ENCODE measurements at regions of chr20 and their contacts with region 1.

Region 1: DNA sequence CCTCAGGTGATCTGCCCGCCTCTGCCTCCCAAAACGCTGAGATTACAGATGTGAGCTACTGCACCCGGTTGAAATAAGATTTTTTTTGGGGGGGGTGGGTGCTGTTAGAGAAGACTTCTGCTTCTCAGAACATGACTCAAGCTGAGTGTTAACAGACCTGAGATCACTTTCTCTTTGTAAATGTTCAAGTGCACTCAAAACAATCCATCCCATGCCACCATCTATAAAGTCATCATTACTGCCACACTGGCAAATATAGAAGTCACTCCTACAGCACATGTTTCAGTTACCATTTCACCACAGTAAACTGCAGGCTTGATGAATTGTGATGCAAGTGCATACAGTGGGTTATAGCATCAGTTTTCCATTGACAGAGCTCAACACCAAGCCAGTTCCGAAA is 9.0 kb downstream of the VPS16 start:
- DNase-seq: no peak
- ATAC-seq: no peak
- H3K4me3 ChIP-seq: no peak overlapping the region
- H3K27ac ChIP-seq: no peak overlapping the region
- H3K4me1 ChIP-seq: peaks cover 3% of the 10 kb centered on the region; the same call in 1 of the 2 replicates
- H3K27me3 ChIP-seq: no peaks in the 10 kb centered on the region
- CTCF ChIP-seq: no peak
- POLR2A ChIP-seq: no peak
- RAD21 ChIP-seq: no peak

Region 2: GRCh38 chr20:2688041-2688591 is 161.4 kb before region 1 on chr20:
- CTCF ChIA-PET with region 1: interaction called, 4 read pairs
- POLR2A ChIA-PET with region 1: no interaction called
- dilution Hi-C with region 1: no loop called
- in situ Hi-C with region 1: no loop called
- intact Hi-C with region 1: loop called (anchors 1 kb)
- DNase-seq: peak; percentile 29
- ATAC-seq: peak; percentile 47; the same call in 1 of the 2 replicates
- H3K4me3 ChIP-seq: no peak overlapping the region
- H3K27ac ChIP-seq: no peak overlapping the region
- H3K4me1 ChIP-seq: no peaks in the 10 kb centered on the region
- H3K27me3 ChIP-seq: peaks cover 39% of the 10 kb centered on the region
- CTCF ChIP-seq: peak; percentile 68
- POLR2A ChIP-seq: no peak
- RAD21 ChIP-seq: peak; percentile 77

Region 3: DNA sequence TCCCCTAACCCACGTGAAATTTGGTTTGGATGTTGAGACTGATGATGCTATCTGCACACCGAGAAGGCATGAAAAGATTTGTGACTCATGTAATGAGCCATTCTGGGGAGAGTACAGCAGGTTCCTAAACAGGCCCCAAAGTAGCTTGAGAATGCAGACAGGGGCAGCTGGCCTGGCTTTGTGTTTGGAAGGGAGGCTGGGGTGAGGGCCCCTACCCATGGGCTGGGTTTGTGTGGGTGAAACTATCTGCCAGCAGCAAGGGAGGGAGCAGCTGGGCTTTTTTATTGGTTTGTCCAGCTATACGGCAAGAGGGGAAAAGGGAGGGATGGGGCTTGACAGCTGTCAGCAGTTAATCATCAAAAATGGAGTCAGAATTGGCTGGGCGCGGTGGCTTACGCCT is 1252.9 kb after region 1 on chr20:
- CTCF ChIA-PET with region 1: no interaction called
- POLR2A ChIA-PET with region 1: no interaction called
- dilution Hi-C with region 1: no loop called
- in situ Hi-C with region 1: no loop called
- intact Hi-C with region 1: no loop called
- DNase-seq: peak; percentile 79
- ATAC-seq: peak; percentile 76
- H3K4me3 ChIP-seq: no peak overlapping the region
- H3K27ac ChIP-seq: no peak overlapping the region
- H3K4me1 ChIP-seq: peaks cover 4% of the 10 kb centered on the region
- H3K27me3 ChIP-seq: no peaks in the 10 kb centered on the region
- CTCF ChIP-seq: no peak
- POLR2A ChIP-seq: no peak
- RAD21 ChIP-seq: no peak

Measured in IMR-90 (cell line).